Activated T-helper 1 cell treated with anti-CD3 and anti-CD28 coated beads, Interleukin-12 subunit alpha, Interleukin-12 subunit beta, Interleukin-2, Interleukin-4 antibody, amounts not matched to agents 30 ng/mL and 10 ng/mL and 1 ng/mL, durations not matched to agents 14 hours and 24 hours and 36 hours (primary cell): ENCODE measurements at regions of chr1 and their contacts with region 1.

Region 1: DNA sequence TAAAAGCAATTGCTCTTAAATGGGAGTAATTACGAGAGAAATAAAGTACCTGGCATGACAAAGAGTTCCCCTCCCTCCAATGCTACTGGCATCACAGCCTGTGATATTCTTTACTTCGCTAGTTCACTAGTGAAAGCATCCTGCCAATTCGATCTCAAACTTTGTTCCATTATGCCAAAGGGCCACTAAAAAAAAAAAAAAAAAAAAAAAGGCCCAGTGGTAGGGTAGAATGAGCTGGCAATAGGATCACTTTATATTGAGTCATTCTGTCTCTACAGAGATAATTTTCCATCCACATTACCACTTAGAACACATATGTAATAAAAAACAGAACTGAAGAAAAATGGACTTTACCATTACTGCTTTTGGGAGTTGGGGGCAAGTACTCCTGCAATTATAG is 11.2 kb downstream of the PUM1 start:
- DNase-seq: no peak
- H3K4me3 Mint-ChIP-seq: peak overlapping the region; percentile 13
- H3K27ac Mint-ChIP-seq: peak overlapping the region; percentile 89
- H3K4me1 Mint-ChIP-seq: peaks cover 43% of the 10 kb centered on the region
- H3K27me3 Mint-ChIP-seq: no peaks in the 10 kb centered on the region

Region 2: DNA sequence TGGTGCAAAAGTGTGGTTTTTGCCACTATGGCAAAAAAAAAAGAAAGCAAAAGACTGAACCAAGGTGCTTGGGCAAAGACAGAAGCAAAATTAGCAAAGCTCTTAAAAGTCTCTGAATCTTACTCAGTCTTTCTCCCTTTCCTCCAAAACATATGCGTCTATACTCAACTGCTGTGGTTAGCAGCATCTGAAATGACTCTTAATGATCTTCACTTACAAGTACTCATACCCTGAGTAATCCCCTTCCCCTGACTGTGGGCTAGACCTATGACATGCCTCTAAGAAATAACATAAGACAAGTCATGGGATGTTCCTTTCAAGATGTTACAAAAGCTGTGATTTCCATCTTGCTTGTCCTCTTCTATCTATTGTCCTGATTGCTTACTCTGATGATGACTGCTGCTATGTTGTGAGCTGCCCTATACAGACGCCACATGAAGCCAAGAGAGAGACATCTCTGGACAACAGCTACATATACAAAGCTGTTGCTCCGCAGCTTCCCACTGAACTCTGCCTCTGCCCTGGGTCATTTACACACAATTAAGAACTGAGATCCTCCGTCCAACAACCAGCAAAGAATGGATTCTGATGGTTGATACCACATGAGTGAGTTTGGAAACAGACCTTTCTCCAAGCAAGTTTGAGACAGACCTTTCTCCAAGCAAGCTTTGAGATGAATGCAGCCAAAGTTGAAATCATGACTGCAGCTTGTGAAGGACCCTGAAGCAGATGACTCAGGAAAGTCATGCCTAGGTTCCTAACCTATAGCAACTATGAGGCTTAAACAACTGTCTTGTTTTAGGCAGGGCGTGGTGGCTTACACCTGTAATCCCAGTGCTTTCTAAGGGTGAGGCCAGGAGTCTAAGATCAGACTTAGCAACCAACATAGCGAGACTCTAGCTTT is 44.0 kb before region 1 on chr1:
- intact Hi-C with region 1: loop called (anchors 1 kb)
- DNase-seq: peak; percentile 9
- H3K4me3 Mint-ChIP-seq: no peak overlapping the region
- H3K27ac Mint-ChIP-seq: peak overlapping the region; percentile 86
- H3K4me1 Mint-ChIP-seq: peaks cover 58% of the 10 kb centered on the region
- H3K27me3 Mint-ChIP-seq: no peaks in the 10 kb centered on the region

Region 3: GRCh38 chr1:31036749-31037500 is 17.4 kb before region 1 on chr1:
- intact Hi-C with region 1: loop called (anchors 2 kb)
- DNase-seq: no peak
- H3K4me3 Mint-ChIP-seq: peak overlapping the region; percentile 7
- H3K27ac Mint-ChIP-seq: peak overlapping the region; percentile 40
- H3K4me1 Mint-ChIP-seq: peaks cover 36% of the 10 kb centered on the region
- H3K27me3 Mint-ChIP-seq: no peaks in the 10 kb centered on the region

Region 4: DNA sequence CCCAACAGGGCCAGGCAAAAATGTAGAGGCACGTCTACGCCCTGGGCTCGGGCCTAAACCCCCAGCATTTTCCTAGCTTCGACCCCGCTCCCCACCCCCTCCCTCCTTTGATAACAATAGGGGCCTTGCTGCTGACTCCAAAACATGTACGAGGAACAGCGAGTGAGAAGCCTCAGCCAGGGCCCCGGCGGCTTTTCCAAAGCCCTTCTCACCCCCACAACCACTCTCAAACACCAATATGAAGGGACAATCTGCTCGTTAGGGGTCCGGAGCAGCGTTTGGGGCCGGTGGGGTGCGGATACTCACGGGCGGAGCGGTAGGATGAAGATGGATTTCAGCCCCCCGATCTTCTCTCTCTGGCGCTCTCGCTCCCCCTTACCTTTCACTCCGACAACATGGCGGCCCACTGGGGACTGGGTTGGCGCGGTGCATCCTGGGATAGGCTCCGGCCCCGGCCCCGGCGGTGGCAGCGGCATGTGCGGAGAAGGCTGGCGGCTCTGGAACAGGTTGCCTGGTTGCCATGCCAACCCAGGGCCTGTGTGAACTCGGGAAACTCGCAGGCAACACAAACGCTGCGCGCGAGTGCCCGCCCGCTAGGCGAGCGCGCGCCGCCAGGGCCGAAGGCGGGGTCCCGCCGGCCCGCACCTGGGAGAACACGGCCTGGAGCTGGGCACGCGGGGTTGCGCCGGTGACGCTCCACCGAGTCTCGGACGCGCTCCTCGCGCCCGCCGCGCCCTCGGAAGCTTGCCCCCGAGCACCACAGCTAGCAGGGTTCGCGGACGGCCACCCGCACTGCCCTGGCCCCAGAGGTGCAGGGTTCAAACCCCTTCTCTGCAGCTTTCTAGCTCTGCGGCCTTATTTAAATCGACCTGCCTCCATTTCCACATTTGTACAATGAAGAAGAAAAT is 11.2 kb after region 1 on chr1 and contains the start of gene PUM1:
- intact Hi-C with region 1: loop called (anchors 1 kb)
- DNase-seq: peak; percentile 97
- H3K4me3 Mint-ChIP-seq: peak within 1 kb of the TSS; percentile 99
- H3K27ac Mint-ChIP-seq: peak within 1 kb of the TSS; percentile 98
- H3K4me1 Mint-ChIP-seq: peaks cover 35% of the 10 kb centered on the region
- H3K27me3 Mint-ChIP-seq: no peaks in the 10 kb centered on the region
- total RNA-seq, gene PUM1: 130 and 132 TPM in 2 replicates

Region 5: GRCh38 chr1:31155216-31155841 is 101.0 kb after region 1 on chr1:
- intact Hi-C with region 1: loop called (anchors 1 kb)
- DNase-seq: peak; percentile 64
- H3K4me3 Mint-ChIP-seq: peak overlapping the region; percentile 94
- H3K27ac Mint-ChIP-seq: peak overlapping the region; percentile 86
- H3K4me1 Mint-ChIP-seq: peaks cover 5% of the 10 kb centered on the region
- H3K27me3 Mint-ChIP-seq: peaks cover 6% of the 10 kb centered on the region